SK-N-SH (cell line): ENCODE measurements at regions of chr4 and their contacts with region 1.

Region 1: GRCh38 chr4:3514806-3515460 is 17.3 kb downstream of the LRPAP1 start:
- DNase-seq: no peak
- H3K4me3 ChIP-seq: no peak overlapping the region
- H3K27ac ChIP-seq: no peak overlapping the region
- H3K4me1 ChIP-seq: no peaks in the 10 kb centered on the region
- H3K27me3 ChIP-seq: no peaks in the 10 kb centered on the region
- CTCF ChIP-seq: peak; percentile 30
- EP300 ChIP-seq: no peak
- RAD21 ChIP-seq: 0 out of 2 replicates have a peak, but pooled peaks have one; percentile 8

Region 2: DNA sequence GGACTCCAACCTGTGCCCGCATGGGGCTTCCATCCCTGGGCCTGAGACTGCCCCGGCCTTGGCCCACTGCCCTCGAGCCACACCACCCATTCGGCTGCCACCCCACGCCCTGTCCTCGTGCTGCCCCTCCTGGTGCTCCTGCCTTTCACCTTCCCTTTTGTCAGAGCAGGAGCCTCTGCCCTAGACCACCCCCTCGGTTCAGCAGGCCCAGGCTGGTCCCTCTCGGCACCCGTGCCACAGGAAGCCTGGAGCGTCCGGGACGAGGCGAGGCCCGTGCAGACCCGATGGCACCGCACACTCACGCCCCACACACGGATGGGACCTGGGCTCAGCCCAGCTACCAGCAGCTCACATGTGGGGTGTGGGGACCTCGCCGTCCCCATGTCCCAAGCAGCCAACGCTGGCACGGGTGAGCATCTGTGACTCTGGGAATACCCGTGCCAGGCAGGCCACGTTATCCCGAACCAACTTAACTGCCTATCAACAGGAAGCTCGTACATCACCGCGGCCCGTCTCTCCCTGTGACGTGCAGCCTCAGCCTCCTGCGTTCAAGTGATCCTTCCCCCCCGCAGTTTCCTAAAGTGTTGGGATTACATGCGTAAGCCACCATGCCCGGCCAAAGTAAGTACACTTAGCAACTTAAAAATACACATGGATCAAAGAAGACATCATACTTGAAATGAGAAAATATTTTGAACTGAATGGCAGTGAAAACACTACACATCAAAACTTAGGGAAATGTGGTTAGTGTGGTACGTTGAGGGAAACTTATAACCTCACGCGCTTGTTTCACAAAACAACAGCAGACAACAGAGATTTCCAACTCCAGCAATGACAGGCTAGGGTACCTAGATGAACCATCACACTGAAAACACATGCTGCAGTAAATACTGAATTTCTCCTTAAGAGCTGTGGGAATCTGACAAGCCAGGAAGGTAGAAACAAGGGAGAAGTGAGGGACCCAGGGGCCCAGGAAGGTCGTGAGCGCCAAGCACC is 11.7 kb before region 1 on chr4:
- CTCF ChIA-PET with region 1: interaction called, 14 read pairs
- POLR2A ChIA-PET with region 1: no interaction called
- DNase-seq: no peak
- H3K4me3 ChIP-seq: no peak overlapping the region
- H3K27ac ChIP-seq: no peak overlapping the region
- H3K4me1 ChIP-seq: no peaks in the 10 kb centered on the region
- H3K27me3 ChIP-seq: no peaks in the 10 kb centered on the region
- CTCF ChIP-seq: no peak
- EP300 ChIP-seq: no peak
- RAD21 ChIP-seq: no peak